ENCODE measurements at regions of chr13 and their contacts with region 1.

Region 1: DNA sequence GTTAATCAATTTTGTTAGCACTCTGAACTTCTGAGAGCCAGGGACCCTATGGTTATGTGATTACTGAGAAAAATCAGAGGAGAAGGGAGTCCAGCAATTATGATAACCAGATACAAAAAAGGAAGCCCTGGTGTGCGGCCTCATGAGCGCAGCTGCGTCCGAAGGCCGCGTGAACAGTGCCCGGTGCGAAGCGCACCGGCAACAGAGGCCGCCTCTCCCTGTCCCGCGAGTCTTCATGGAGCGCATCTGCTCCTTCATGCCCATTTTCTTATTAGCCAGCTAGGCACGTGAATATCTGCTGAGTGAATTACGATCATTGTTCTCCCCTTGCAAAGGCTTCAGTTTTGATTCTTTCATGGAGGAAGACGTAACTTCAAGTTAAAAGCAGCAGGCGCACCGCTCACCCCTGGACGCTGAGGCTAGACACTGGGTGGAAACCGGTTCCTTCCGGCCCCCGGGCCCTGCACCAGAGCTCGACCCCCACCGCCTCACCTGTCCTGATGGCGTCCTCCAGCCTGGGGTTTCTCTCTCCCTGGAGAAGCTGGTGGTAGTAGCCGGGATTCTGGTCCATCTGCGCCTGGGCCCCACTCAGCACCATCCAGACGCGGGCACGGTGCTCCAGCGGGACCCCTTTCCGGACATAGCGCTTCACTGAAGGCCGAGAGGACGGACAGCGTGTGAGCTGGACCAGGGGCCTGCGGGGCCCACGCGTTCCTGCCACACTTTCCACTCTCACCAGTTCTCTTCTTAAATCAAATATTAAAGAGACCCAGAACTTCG is 8.9 kb downstream of the GRTP1 start:
- DNase-seq: peak; percentile 54

Region 2: DNA sequence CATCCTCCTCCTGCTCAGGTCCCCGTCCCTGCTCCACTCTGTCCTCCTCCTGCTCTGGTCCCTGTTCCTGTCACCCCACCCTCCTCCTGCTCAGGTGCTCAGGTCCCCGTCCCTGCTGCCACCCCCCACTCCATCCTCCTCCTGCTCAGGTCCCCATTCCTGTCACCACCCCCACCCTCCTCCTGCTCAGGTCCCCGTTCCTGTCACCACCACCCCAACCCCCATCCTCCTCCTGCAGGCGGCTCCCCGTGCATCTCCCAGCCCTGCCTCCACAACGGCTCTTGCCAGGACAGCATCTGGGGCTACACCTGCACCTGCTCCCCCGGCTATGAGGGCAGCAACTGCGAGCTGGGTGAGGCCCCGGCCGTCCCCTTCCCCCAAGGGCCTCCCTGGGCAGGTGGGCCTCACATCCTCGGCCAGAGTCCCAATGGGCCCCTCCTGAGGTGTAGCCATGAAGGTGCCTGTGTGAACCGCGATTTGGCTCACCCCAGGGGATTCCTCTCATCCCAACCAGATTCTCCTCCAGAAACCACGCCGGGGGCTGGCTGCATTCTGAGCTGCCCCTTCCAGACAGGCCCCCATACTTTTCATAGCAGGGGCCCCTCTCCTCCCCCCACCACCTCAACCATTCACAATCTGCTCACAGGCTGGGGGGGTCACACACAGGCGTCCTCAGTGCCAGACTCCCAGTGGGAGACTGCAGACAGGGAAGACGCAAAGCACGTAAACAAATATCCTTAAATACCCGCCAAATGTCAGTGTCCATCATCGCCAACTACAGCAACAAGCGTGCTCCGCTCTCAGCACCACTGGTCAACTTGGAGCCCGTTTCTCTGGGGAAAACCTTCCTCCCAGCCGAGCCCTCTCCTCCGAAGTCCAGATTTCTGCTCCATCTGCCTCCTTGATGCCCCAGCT is 192.0 kb before region 1 on chr13:
- intact Hi-C with region 1: no loop called
- DNase-seq: no peak

Region 3: DNA sequence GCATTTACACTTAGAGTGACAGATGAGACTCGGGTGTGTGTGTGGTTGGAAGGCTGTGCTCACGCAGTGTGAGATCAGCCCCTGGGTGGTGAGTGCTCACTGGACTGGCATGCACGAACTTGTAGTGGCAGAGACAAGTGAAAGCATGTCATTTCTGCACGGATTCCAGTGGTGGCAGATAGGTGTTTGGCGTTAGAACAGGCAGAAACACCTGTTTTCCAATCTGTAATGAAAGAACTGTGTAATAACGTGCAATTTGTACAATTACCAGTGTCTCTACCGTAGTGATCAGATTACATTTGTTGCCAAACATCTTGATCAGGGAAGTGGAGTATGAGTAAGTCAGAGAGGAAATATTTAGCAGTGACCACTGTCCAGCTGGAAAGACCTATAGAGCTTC is 49.8 kb before region 1 on chr13:
- intact Hi-C with region 1: loop called in 1 of 2 experiments (anchors 1 kb)
- DNase-seq: no peak

Region 4: GRCh38 chr13:113365971-113366588 is 11.1 kb after region 1 on chr13:
- intact Hi-C with region 1: no loop called
- DNase-seq: no peak